Mucosa of descending colon (tissue), 3 donors: ENCODE measurements at regions of chr9 and their contacts with region 1.

Region 1: DNA sequence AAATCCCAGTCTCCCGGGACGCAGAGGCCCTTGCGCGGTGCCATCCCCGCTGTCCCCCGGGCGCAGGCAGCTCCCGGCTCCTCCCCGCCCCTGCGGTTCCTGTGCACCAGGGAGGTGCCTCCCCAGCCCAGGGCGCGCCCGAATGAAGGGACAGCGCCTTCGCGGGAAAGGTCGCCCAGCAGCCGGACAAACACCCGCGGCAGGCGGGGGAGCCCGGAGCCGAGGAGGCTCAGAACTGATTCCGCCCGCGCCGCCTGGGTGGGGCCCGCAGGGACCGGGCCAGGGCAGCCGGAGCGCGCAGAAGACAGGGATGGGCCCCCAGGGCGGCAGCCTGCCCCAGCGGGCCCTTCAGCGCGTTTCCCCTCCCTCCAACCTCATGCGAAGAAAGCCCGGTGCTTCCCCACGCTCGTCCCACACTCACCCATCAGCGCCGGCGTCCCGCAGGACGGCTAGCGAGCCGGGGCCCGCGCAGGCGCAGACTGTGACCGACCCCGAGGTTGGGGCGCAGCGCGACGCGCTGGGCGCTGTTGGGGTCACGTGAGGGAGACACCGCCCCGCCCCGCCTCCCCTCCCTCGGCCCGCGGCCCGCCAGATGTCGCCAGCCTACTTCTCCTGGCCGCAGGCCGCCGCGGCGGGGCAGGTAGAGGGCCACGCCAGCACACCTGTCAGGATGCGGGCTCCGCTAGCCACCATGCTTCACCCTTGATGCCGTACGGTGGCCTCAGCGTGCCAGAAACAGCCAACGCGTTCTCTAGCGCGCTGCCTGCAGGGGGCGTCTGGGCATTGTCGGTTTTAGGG is at the start of gene SLC25A51:
- DNase-seq: peak; percentile 95 to 98 (median 96)
- ATAC-seq: peak; percentile 94
- H3K4me3 ChIP-seq: peak within 1 kb of the TSS; percentile 56
- H3K4me1 ChIP-seq: peaks cover 17% of the 10 kb centered on the region
- CTCF ChIP-seq: peak; percentile 80
- total RNA-seq, gene SLC25A51: 20.6 to 32.2 (median 22.4) TPM

Region 2: DNA sequence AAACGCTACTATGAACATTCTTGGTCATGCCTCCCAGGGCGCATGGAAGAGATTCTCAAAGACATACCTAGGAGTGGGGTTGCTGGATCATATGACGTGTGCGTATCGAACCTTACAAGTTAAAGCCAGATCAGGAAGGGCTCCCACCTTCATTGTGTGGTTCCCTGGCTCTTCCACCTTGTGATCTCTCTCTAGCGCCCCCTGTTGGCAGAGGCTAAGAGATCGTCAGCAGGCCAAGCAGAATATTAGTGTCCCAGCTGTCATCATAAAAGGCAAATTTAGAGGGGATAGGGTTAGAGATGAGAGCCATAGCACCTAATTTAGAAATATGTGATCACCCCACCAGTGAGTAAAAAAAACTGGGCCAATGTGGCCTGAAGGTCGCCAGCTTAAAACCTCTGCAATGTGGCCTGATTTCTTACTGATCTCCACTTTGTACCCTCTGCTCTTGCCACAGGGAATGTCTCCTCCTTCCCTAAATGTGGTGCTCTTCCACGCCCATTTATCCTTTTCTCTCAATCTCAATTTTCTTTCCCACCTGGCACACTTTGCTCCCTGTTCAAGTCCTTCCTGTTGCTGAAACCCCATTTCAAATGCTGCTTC is 256.9 kb after region 1 on chr9:
- intact Hi-C with region 1: loop called in 1 of 2 experiments (anchors 10 kb)
- DNase-seq: peak in 2 of 3 donors; percentile 62 to 84
- ATAC-seq: peak; percentile 81
- H3K4me3 ChIP-seq: no peak overlapping the region
- H3K4me1 ChIP-seq: no peaks in the 10 kb centered on the region
- CTCF ChIP-seq: peak; percentile 73